ENCODE measurements at regions of chr12 and their contacts with region 1.

Region 1: DNA sequence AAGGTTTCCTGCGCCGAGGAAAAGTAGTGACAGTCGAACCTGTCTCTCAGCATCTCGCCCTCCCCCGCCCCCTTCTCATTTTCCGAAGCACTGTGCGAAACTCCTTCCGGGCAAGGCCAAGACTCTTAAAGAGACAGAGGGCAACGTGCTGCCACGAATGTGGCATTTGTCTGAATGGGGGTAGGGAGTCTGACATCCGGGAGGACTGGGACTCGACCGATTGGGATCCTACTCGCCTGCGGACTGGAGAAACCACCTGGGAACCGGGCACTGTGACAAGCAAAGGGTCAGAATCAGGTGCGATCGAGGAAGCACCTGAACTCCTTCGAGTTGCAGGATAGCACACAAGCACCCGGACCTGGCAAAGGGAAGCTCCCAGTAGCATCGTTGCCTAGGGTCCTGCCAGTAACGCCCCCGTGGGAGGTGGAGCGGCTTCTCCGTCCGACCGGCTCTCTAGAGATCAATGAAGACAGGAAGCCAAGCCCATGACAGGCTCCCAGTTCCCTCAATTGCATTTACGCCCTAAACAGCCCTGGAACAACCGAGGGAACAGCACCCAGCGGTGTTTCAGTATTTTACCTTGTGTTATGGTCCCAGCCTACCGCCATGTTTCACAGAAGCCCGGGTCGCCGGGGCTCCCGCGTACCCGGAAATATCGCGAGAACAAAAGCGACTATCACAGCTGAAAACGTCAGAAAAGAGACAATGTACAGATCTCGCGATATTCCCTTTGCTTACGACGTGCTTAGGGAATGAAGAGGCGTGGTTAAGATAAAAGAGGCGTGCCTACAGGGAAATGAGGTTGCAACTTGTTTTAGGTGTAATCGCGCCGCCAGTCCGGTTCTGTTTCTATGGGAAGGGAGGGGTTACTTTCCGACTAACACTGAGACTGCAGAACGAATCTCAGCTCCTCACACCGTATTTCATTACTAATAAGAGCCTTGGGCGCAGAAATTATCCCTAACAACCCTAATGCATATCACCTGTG is at the start of gene ERGIC2:
- DNase-seq: peak; percentile 100
- ATAC-seq: peak; percentile 94
- H3K4me3 ChIP-seq: peak within 1 kb of the TSS; percentile 77
- H3K27ac ChIP-seq: peak within 1 kb of the TSS; percentile 81
- H3K4me1 ChIP-seq: peaks cover 22% of the 10 kb centered on the region
- H3K27me3 ChIP-seq: no peaks in the 10 kb centered on the region
- CTCF ChIP-seq: no peak
- total RNA-seq, gene ERGIC2: 142 and 184 TPM in 2 replicates

Region 2: GRCh38 chr12:29110506-29111442 is 270.1 kb before region 1 on chr12:
- CTCF ChIA-PET with region 1: no interaction called
- POLR2A ChIA-PET with region 1: no interaction called
- intact Hi-C with region 1: no loop called
- DNase-seq: no peak
- ATAC-seq: no peak
- H3K4me3 ChIP-seq: no peak overlapping the region
- H3K27ac ChIP-seq: no peak overlapping the region
- H3K4me1 ChIP-seq: peaks cover 12% of the 10 kb centered on the region
- H3K27me3 ChIP-seq: no peaks in the 10 kb centered on the region
- CTCF ChIP-seq: no peak

Region 3: DNA sequence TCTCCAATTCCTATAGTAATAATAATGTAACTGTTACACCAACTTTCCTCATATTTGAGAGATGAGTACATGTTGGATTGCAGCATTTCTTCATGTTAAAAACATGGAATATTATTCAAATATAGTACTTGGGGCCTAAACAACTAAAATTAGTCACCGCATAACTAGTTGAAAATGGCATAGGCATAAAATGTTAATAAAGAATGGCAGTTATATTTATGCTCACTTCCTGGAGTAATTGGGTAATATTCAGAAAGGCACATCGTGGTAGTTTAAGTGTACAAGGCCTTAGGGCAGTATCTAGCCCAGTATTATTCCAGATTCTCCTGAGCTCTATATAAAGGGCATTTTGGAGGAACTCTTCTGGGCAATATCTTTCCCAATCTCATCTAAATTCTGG is 45.9 kb before region 1 on chr12:
- CTCF ChIA-PET with region 1: no interaction called
- POLR2A ChIA-PET with region 1: no interaction called
- intact Hi-C with region 1: loop called (anchors 1 kb)
- DNase-seq: no peak
- ATAC-seq: no peak
- H3K4me3 ChIP-seq: no peak overlapping the region
- H3K27ac ChIP-seq: no peak overlapping the region
- H3K4me1 ChIP-seq: no peaks in the 10 kb centered on the region
- H3K27me3 ChIP-seq: no peaks in the 10 kb centered on the region
- CTCF ChIP-seq: no peak

Region 4: DNA sequence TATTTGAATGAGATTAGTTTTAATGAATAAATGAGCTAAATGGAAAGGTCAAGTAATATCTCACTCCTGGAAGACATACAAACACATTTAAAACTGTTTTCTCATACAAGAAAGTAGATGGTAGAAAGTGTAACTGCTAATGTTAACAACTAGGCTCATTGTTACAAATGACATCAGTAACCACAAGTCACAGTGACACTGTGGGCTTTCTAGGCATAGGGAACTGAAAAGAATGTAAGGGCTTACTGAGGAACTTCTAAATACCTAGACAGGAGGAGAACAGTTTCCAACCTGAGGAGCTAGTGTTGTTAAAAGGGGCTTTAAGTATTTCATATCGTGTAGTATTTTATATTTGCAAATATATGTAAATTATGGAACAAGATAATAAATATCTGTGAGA is 17.7 kb after region 1 on chr12:
- CTCF ChIA-PET with region 1: no interaction called
- POLR2A ChIA-PET with region 1: interaction called, 18 read pairs
- intact Hi-C with region 1: no loop called
- DNase-seq: no peak
- ATAC-seq: no peak
- H3K4me3 ChIP-seq: no peak overlapping the region
- H3K27ac ChIP-seq: no peak overlapping the region
- H3K4me1 ChIP-seq: no peaks in the 10 kb centered on the region
- H3K27me3 ChIP-seq: peaks cover 15% of the 10 kb centered on the region; the same call in 1 of the 2 replicates
- CTCF ChIP-seq: no peak

Region 5: GRCh38 chr12:29427964-29428363 is 47.1 kb after region 1 on chr12:
- CTCF ChIA-PET with region 1: interaction called, 3 read pairs
- POLR2A ChIA-PET with region 1: interaction called, 5 read pairs
- intact Hi-C with region 1: loop called (anchors 1 kb)
- DNase-seq: peak; percentile 53
- ATAC-seq: peak; percentile 6; the same call in 1 of the 2 replicates
- H3K4me3 ChIP-seq: no peak overlapping the region
- H3K27ac ChIP-seq: peak overlapping the region; percentile 28
- H3K4me1 ChIP-seq: peaks cover 56% of the 10 kb centered on the region
- H3K27me3 ChIP-seq: no peaks in the 10 kb centered on the region
- CTCF ChIP-seq: peak; percentile 56

Measured in PC-3 (cell line).